ENCODE measurements at regions of chr6 and their contacts with region 1.

Region 1: DNA sequence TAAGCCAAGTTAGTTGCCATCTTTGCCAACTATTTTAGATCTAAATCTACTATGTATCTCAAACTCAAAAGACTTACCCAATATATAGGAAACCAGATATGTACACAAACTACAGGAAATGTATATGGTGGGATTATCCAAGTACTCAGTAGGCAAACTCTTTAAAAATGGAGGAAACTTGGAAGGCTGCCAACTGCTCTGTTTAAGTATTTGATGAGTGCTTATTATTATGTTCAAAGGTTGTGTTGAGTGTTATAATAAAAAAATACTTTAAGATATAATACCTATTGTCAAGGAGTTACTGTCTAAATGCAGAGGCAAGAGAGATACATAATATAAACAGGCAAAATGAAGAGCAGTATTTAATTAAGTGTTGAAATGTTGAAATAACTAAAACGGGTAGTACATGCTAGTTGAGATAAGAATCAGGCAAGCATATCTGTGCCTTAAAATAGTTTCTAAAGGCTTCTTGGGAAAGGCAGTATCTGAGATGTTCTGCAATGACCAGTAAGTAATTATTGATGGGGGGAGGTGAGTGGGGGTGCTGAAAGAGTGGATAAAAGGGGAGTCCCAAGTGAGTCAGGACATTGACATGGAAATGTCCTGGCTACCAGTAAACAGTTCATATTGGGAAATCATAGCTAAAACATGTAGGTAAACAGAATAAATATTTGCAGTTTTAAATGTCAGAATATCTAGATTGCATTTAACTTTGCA is 6.5 kb upstream of the DST start:
- DNase-seq: no peak
- ATAC-seq: peak; percentile 11 to 51
- H3K4me3 ChIP-seq: no peak overlapping the region
- H3K27ac ChIP-seq: peak overlapping the region in 3 of 4 donors; percentile 19 to 55 (median 51)
- H3K4me1 ChIP-seq: peaks cover 10 to 12% of the 10 kb centered on the region in 2 donors
- H3K27me3 ChIP-seq: no peaks in the 10 kb centered on the region
- CTCF ChIP-seq: no peak
- POLR2A ChIP-seq: no peak

Region 2: DNA sequence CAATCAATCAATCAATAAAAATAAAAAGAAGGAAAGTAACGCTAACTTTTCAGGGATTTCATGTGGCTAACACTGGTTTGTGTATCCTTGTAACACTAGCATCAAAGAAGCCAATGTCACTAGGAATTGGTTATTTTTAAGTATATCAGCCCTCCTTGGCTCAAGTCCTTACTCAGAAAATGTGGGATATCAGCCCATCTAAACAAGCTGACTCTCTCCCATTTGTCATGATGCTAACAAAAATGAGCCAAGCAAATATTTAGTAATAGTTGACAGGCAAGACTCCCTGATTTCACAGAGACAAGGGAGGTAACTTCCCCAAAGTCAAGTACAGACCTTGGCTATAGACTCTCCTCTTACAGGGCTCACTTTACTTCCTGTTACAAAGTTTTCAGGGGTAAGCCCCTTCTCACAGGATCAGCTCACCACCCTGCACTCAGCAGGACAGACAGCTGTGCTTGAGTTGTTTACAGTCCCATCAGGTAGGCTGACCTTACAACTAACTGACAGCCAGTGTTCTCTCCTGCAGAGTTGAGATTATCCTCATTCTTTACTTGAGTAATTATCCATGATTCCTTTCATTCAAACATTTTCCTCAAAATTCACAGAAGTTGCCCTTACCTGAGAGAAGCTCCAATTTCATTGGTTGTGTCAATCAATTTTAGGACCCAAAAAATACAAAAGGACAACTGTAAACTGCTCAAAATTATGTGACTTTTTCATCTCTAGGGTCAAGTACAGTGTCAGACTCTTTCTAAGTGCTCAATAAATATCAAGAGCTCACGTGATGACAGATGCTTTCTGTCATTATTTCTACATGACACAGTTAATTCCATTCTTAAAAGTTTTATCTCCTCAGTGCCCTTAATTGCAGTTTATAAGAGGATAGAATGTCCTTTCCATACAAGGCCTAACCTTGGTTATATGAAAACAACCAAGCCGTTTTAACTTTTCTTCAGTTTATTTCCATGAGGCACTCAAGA is 735.7 kb before region 1 on chr6:
- in situ Hi-C with region 1: no loop called
- intact Hi-C with region 1: no loop called
- DNase-seq: no peak
- ATAC-seq: peak; percentile 27 to 47
- H3K4me3 ChIP-seq: no peak overlapping the region
- H3K27ac ChIP-seq: peak overlapping the region in 2 of 4 donors; percentile 16 to 31
- H3K4me1 ChIP-seq: no peaks in the 10 kb centered on the region
- H3K27me3 ChIP-seq: no peaks in the 10 kb centered on the region
- CTCF ChIP-seq: no peak
- POLR2A ChIP-seq: no peak

Region 3: DNA sequence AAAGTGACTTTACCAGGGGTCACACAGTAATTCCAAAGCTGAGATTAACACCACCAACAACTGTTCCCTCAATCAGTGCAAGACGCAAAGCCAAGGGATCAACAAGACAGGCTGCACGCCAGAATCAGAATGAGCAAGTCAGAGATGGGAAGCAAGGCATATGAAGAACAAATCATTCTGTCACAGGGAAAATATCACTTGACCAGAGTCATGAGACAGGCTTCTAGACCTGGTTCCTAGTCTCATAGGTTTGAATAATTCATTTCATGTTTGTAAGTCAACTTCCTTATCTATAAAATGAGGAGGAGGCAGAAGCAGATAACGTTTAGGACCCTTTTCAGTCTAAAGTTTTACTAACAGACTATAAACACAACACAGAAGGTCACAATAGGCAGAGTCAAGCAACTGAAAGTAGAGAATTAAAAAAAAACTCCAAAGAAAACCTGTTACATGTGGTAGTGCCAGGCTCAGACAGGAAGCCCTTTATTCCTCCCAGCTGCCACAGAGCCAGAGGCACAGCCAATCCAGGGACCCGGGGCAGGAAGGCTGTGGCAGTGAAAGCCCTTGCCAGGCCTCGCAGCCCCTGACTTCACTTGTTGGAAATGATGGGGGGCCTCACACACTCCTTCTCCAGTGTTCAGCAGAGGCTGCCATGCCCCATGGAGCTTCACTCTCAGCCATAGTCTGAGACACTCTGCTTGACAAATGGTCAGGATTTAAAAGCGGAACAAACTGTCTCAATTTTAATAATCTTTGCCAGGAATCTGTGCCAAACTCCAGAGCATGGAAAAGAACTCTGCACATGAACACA is 22.6 kb after region 1 on chr6:
- in situ Hi-C with region 1: no loop called
- intact Hi-C with region 1: no loop called
- DNase-seq: peak; percentile 68 to 69
- ATAC-seq: peak; percentile 84 to 92
- H3K4me3 ChIP-seq: peak overlapping the region; percentile 16 to 37 (median 32)
- H3K27ac ChIP-seq: peak overlapping the region; percentile 89 to 96 (median 90)
- H3K4me1 ChIP-seq: peaks cover 46 to 47% of the 10 kb centered on the region in 2 donors
- H3K27me3 ChIP-seq: no peaks in the 10 kb centered on the region
- CTCF ChIP-seq: no peak
- POLR2A ChIP-seq: peak in 1 of 2 donors; percentile 39

Region 4: DNA sequence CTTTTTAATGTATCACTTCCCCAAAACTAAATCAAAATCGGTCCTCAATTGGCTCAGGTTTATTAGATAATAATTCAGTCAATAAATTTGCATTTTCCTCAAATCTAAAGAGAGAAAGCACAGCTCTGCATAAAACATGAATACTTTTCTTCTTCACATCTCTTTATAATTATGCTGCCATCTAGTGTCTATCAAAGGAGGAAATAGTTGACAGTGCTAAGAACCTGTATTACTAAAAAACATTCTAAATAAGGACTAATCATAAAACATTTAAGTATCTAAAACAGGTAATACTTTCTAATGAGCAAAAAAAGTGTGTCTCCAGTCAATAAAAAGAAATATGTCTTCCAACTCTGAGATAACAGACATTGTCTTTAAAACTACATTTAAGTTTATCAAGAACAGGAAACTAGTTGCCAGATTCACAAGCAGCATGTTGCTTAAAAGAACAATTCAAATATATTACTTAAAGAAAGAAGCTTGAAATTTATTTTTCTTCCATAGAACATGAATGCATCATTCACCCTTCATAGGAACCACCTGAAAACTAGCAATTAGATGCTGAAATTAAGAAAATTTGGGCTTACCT is 49.9 kb after region 1 on chr6:
- in situ Hi-C with region 1: loop called in 2 of 4 experiments (anchors 5 to 10 kb)
- intact Hi-C with region 1: no loop called
- DNase-seq: no peak
- ATAC-seq: peak; percentile 44 to 68
- H3K4me3 ChIP-seq: no peak overlapping the region
- H3K27ac ChIP-seq: peak overlapping the region in 1 of 4 donors; percentile 89
- H3K4me1 ChIP-seq: peaks cover 14 to 19% of the 10 kb centered on the region in 2 donors
- H3K27me3 ChIP-seq: no peaks in the 10 kb centered on the region
- CTCF ChIP-seq: peak; percentile 55 to 79 (median 65)
- POLR2A ChIP-seq: no peak

Region 5: DNA sequence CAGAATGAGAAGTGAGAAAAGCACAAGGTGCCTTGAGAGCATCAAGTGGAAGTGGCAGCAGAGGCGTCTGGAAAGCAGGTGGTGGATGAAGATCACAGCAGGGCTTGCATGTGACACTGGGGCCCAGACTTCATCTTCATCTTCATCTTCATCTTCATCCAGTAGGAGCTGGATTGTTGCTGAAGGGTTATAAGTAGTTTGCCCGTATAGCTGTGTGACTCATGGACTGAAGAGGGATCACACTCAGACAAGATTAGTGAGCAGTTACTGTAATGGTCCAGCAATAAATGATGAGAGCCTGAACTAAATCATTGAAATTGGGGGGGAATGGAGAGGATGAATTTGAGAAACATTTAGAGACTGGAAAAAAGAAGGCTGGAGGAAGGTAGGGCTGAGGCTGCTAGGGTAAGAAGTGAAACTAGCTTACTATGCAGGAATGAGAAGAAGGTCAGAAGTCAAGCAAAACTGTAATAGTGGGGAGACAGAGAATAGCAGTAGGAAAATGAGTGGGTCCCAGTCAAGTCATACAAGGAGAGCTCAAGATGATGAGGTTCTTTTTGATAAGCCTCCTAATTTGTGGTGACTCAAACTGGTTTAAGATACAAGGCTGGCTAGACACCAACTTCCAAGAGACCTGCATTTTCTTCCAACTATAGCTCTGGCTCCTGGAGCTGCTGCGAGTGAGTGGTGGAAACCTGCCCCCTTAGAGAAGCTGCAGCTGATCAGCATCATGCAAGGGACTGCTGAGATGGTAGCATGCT is 213.4 kb after region 1 on chr6:
- in situ Hi-C with region 1: no loop called
- intact Hi-C with region 1: no loop called
- DNase-seq: no peak
- ATAC-seq: no peak
- H3K4me3 ChIP-seq: no peak overlapping the region
- H3K27ac ChIP-seq: no peak overlapping the region
- H3K4me1 ChIP-seq: no peaks in the 10 kb centered on the region
- H3K27me3 ChIP-seq: no peaks in the 10 kb centered on the region
- CTCF ChIP-seq: no peak
- POLR2A ChIP-seq: no peak

Measured in gastrocnemius medialis (tissue), 4 donors.